ENCODE measurements at regions of chr7 and their contacts with region 1.

Region 1: GRCh38 chr7:101363734-101364374 is 1.2 kb downstream of the COL26A1 start:
- DNase-seq: peak; percentile 7
- ATAC-seq: peak; percentile 94
- H3K4me3 ChIP-seq: peak overlapping the region; percentile 58 to 69
- H3K27ac ChIP-seq: peak overlapping the region; percentile 86
- H3K4me1 ChIP-seq: peaks cover 18% of the 10 kb centered on the region
- H3K27me3 ChIP-seq: no peaks in the 10 kb centered on the region
- CTCF ChIP-seq: peak; percentile 97

Region 2: GRCh38 chr7:101401390-101402087 is 37.7 kb after region 1 on chr7:
- CTCF ChIA-PET with region 1: interaction called, 13 read pairs
- POLR2A ChIA-PET with region 1: no interaction called
- in situ Hi-C with region 1: no loop called
- intact Hi-C with region 1: no loop called
- DNase-seq: no peak
- ATAC-seq: peak; percentile 25
- H3K4me3 ChIP-seq: peak overlapping the region; percentile 2 to 44; a peak in 2 of 4 replicates
- H3K27ac ChIP-seq: peak overlapping the region; percentile 68
- H3K4me1 ChIP-seq: peaks cover 22% of the 10 kb centered on the region
- H3K27me3 ChIP-seq: no peaks in the 10 kb centered on the region; the same call in 1 of the 2 replicates
- CTCF ChIP-seq: no peak

Region 3: GRCh38 chr7:101410743-101411507 is 47.1 kb after region 1 on chr7:
- CTCF ChIA-PET with region 1: interaction called, 5 read pairs
- POLR2A ChIA-PET with region 1: no interaction called
- in situ Hi-C with region 1: no loop called
- intact Hi-C with region 1: loop called (anchors 10 kb)
- DNase-seq: no peak
- ATAC-seq: peak; percentile 75
- H3K4me3 ChIP-seq: no peak overlapping the region
- H3K27ac ChIP-seq: peak overlapping the region; percentile 70
- H3K4me1 ChIP-seq: peaks cover 6% of the 10 kb centered on the region; the same call in 1 of the 2 replicates
- H3K27me3 ChIP-seq: no peaks in the 10 kb centered on the region
- CTCF ChIP-seq: peak; percentile 95

Region 4: DNA sequence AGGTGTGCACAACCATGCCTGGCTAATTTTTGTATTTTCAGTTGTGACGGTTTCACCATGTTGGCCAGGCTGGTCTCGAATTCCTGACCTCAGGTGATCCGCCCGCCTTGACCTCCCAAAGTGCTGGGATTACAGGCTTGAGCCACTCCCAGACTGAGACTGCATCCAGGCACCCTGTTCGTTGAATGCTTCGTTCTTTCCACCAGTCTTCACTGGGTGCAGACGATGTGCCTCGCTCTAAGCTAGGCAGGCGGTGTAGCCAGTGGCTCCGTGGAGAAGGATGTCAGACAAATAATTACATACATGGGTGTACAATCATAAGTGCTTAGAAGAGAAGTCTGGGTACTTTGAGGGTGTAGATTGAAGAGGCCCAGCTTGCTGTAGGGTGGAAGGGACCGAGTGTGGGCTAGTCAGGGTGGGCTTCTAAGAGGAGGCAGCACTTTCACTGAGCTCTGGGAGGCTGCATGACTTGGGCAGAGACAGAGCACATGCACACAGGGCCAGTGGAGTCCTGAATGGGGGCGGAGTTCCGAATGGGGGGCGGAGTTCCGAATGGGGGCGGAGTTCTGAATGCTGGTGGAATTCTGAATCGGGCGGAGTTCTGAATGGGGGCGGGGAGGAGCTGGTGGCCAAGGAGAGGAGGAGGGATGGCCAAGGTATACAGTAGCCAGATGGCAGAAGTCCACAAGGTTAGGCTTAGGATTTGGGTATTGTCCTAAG is 73.2 kb after region 1 on chr7:
- CTCF ChIA-PET with region 1: interaction called, 10 read pairs
- POLR2A ChIA-PET with region 1: interaction called, 15 read pairs
- in situ Hi-C with region 1: no loop called
- intact Hi-C with region 1: no loop called
- DNase-seq: no peak
- ATAC-seq: peak; percentile 55
- H3K4me3 ChIP-seq: no peak overlapping the region
- H3K27ac ChIP-seq: no peak overlapping the region
- H3K4me1 ChIP-seq: peaks cover 6% of the 10 kb centered on the region
- H3K27me3 ChIP-seq: no peaks in the 10 kb centered on the region
- CTCF ChIP-seq: no peak

Region 5: GRCh38 chr7:101507791-101508252 is 144.0 kb after region 1 on chr7:
- CTCF ChIA-PET with region 1: interaction called, 5 read pairs
- POLR2A ChIA-PET with region 1: no interaction called
- in situ Hi-C with region 1: no loop called
- intact Hi-C with region 1: loop called (anchors 10 kb)
- DNase-seq: peak; percentile 47
- ATAC-seq: peak; percentile 69
- H3K4me3 ChIP-seq: no peak overlapping the region
- H3K27ac ChIP-seq: peak overlapping the region; percentile 51; the same call in 1 of the 2 replicates
- H3K4me1 ChIP-seq: peaks cover 6% of the 10 kb centered on the region
- H3K27me3 ChIP-seq: no peaks in the 10 kb centered on the region
- CTCF ChIP-seq: peak; percentile 96

Measured in Panc1 (cell line).